ENCODE measurements at regions of chr15 and their contacts with region 1.

Region 1: GRCh38 chr15:52078876-52079700 is 33.5 kb downstream of the BCL2L10 start:
- DNase-seq: peak; percentile 83
- ATAC-seq: peak in 7 of 8 donors; percentile 71 to 90 (median 85)
- H3K4me3 ChIP-seq: no peak overlapping the region
- H3K27ac ChIP-seq: no peak overlapping the region
- H3K4me1 ChIP-seq: peaks cover 0 to 21% (median 0%) of the 10 kb centered on the region in 9 donors
- H3K27me3 ChIP-seq: no peaks in the 10 kb centered on the region
- CTCF ChIP-seq: peak; percentile 70 to 94 (median 90)

Region 2: GRCh38 chr15:51982013-51982769 is 96.9 kb before region 1 on chr15:
- intact Hi-C with region 1: loop called in 9 of 10 experiments (anchors 1 to 10 kb)
- DNase-seq: peak; percentile 23 to 24
- ATAC-seq: peak; percentile 71 to 87 (median 74)
- H3K4me3 ChIP-seq: peak overlapping the region in 7 of 10 donors; percentile 18 to 39 (median 32)
- H3K27ac ChIP-seq: peak overlapping the region; percentile 20 to 84 (median 72)
- H3K4me1 ChIP-seq: peaks cover 0 to 24% (median 22%) of the 10 kb centered on the region in 9 donors
- H3K27me3 ChIP-seq: no peaks in the 10 kb centered on the region
- CTCF ChIP-seq: peak; percentile 10 to 68 (median 56)

Region 3: GRCh38 chr15:52134502-52135144 is 55.5 kb after region 1 on chr15:
- intact Hi-C with region 1: no loop called
- DNase-seq: no peak
- ATAC-seq: no peak
- H3K4me3 ChIP-seq: no peak overlapping the region
- H3K27ac ChIP-seq: no peak overlapping the region
- H3K4me1 ChIP-seq: peaks cover 0 to 29% (median 9%) of the 10 kb centered on the region in 9 donors
- H3K27me3 ChIP-seq: no peaks in the 10 kb centered on the region
- CTCF ChIP-seq: no peak